PC-9 (cell line): ENCODE measurements at regions of chr2 and their contacts with region 1.

Region 1: GRCh38 chr2:95685513-95685912 is 93.7 kb downstream of the TRIM43 start:
- DNase-seq: peak in 1 of 2 experiments; percentile 3
- H3K4me3 ChIP-seq: no peak overlapping the region
- H3K27ac ChIP-seq: no peak overlapping the region
- H3K4me1 ChIP-seq: no peaks in the 10 kb centered on the region
- H3K27me3 ChIP-seq: peaks cover 24% of the 10 kb centered on the region
- CTCF ChIP-seq: no peak

Region 2: GRCh38 chr2:95526360-95527341 is 158.9 kb before region 1 on chr2:
- CTCF ChIA-PET with region 1: no interaction called
- POLR2A ChIA-PET with region 1: no interaction called
- intact Hi-C with region 1: loop called (anchors 5 kb)
- DNase-seq: peak; percentile 72 to 81
- H3K4me3 ChIP-seq: peak overlapping the region; percentile 96
- H3K27ac ChIP-seq: peak overlapping the region; percentile 64
- H3K4me1 ChIP-seq: peaks cover 13% of the 10 kb centered on the region
- H3K27me3 ChIP-seq: no peaks in the 10 kb centered on the region
- CTCF ChIP-seq: peak; percentile 61; the same call in 1 of the 2 replicates